ENCODE measurements at regions of chr2 and their contacts with region 1.

Region 1: GRCh38 chr2:201007561-201007998 is 44.1 kb upstream of the ORC2 start:
- DNase-seq: no peak
- CTCF ChIP-seq: no peak

Region 2: GRCh38 chr2:201049455-201049854 is 41.9 kb after region 1 on chr2:
- CTCF ChIA-PET with region 1: no interaction called
- POLR2A ChIA-PET with region 1: no interaction called
- DNase-seq: no peak
- CTCF ChIP-seq: no peak

Region 3: DNA sequence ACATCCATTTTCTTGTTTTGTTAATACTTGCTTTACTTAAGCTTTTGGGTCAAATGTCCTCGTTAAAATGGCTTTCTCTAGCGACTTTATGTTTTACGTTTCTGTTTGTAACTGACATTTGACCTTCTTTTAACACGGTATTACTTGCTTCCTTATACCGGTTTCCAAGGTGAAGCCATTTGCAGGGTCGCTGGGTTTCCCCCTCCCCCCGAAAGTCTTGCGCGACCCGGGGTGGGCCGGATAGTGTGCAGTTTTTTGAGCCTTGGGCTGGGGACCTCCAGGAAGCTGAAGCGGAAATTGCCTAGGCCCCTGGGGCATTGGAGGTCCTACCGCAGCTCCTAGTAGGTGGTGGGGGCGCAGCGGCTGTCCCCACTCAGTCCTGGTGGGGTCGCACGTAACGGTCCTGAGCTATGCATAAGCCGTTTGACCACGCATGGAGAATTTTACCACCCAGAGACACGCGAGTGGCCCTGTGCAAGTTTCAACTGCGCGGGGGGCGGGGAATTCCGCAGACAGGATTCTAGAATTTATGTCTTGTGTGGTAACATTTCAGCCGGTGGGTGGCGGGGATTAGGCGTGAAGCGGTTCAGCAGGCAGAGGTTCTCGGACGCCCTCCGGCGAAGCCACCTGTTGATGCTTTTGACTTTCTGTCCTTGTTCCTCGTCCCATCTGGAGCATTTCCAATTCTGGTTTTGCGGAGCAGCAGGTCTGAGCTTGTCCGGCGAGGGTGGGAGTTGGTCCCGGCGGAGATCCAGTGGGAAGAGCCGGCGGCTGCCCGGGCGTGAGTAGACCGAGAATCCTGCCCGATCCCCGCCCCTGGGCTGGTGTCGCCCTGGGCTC is 110.8 kb after region 1 on chr2:
- CTCF ChIA-PET with region 1: no interaction called
- POLR2A ChIA-PET with region 1: no interaction called
- DNase-seq: peak; percentile 73
- CTCF ChIP-seq: peak; percentile 39

Region 4: DNA sequence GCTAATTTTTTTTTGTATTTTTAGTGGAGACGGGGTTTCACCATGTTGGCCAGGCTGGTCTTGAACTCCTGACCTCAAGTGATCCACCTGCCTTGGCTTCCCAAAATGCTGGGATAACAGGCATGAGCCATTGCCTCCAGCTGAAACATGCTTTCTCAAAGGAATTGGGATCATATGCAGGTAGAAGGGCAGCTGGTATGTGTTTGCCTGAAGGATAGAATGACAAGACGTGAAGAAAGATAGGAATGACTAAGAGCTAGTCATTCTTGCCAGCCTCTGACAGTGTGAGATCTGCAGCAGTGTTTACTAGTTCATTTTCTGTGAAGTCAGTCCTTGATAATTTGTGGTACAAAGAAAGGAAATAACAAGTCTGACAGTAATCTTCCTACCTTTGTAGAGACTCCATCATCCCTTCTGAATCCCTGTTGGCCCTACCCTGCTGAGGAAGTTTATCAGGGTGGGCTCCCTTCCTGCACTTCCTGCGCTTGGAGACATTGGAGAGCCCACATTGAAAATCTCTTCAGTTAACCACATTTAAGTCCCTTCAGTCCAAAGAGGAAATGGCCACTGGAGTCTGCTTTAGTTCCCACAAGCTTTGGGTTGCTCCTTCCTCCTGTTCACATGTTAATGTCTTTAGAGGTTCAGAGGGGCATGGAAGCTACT is 123.1 kb after region 1 on chr2:
- CTCF ChIA-PET with region 1: no interaction called
- POLR2A ChIA-PET with region 1: interaction called, 11 read pairs
- DNase-seq: no peak
- CTCF ChIP-seq: no peak

Measured in GM10248 (cell line).